Activated naive CD8-positive, alpha-beta T cell treated with anti-CD3 and anti-CD28 coated beads, Interleukin-2, amount 10 ng/mL, durations not matched to agents 7 days and 5 days (primary cell): ENCODE measurements at regions of chr12 and their contacts with region 1.

Region 1: GRCh38 chr12:49018261-49019119 is at the start of gene PRKAG1:
- DNase-seq: peak; percentile 98
- ATAC-seq: peak; percentile 91
- H3K4me3 Mint-ChIP-seq: peak within 1 kb of the TSS; percentile 95
- H3K27ac Mint-ChIP-seq: peak within 1 kb of the TSS; percentile 97
- H3K4me1 Mint-ChIP-seq: peaks cover 26% of the 10 kb centered on the region
- H3K27me3 Mint-ChIP-seq: no peaks in the 10 kb centered on the region
- total RNA-seq, gene PRKAG1: 50.0 to 56.6 TPM

Region 2: GRCh38 chr12:48996794-48997718 is 21.4 kb before region 1 on chr12:
- POLR2A ChIA-PET with region 1: interaction called, 21 read pairs
- DNase-seq: peak; percentile 73
- ATAC-seq: peak; percentile 48
- H3K4me3 Mint-ChIP-seq: peak overlapping the region; percentile 44
- H3K27ac Mint-ChIP-seq: no peak overlapping the region
- H3K4me1 Mint-ChIP-seq: peaks cover 17% of the 10 kb centered on the region
- H3K27me3 Mint-ChIP-seq: peaks cover 58% of the 10 kb centered on the region